Ascending aorta (tissue), 2 donors: ENCODE measurements at regions of chr4 and their contacts with region 1.

Region 1: GRCh38 chr4:5050520-5051277 is 581 bp upstream of the STK32B start:
- DNase-seq: peak in 1 of 2 donors; percentile 80
- H3K4me3 ChIP-seq: peak overlapping the region; percentile 47 to 62
- H3K27ac ChIP-seq: no peak overlapping the region
- H3K4me1 ChIP-seq: peaks cover 0 to 2% of the 10 kb centered on the region in 2 donors
- H3K27me3 ChIP-seq: no peaks in the 10 kb centered on the region
- CTCF ChIP-seq: peak; percentile 56 to 70 (median 60)

Region 2: DNA sequence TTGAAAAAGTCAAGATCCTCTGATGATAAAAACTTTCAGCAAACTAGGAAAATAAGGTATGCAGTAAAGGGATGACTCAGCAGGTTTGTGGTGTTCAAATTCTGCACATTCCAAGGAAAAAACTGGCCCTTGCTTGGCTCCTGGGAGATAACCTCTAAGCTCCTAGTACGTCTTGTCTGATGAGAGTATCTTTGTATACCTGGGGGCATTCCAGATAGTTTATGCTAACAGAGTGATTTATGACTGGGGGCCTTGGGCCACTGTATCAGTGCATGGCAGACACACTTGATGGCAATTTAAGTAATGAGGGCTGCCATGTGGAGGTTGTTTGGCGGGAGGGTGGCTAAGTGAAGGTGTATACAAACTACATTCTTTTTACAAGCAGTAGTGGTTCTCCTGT is 606.9 kb before region 1 on chr4:
- intact Hi-C with region 1: no loop called
- DNase-seq: no peak
- H3K4me3 ChIP-seq: no peak overlapping the region
- H3K27ac ChIP-seq: no peak overlapping the region
- H3K4me1 ChIP-seq: no peaks in the 10 kb centered on the region
- H3K27me3 ChIP-seq: no peaks in the 10 kb centered on the region
- CTCF ChIP-seq: no peak

Region 3: DNA sequence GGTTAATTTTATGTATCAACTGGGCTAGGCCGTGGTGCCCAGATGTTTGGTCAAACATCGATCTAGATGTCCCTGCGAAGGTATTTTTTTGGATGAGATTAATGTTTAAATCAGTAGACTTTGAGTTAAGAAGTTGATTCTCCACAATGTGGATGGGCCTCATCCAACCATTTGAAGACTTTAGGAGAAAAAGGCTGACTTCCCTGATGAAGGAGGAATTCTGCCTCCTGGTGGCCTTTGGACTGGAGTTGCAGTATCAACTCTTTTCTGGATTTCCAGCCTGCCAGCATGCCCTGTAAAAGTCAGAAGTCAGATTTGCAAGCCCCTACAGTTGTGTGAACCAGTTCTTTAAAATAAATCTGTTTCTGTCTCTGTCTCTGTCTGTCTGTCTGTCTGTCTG is 92.0 kb after region 1 on chr4:
- intact Hi-C with region 1: loop called (anchors 2 kb)
- DNase-seq: no peak
- H3K4me3 ChIP-seq: no peak overlapping the region
- H3K27ac ChIP-seq: no peak overlapping the region
- H3K4me1 ChIP-seq: no peaks in the 10 kb centered on the region
- H3K27me3 ChIP-seq: no peaks in the 10 kb centered on the region
- CTCF ChIP-seq: peak; percentile 28 to 53 (median 38)